ENCODE measurements at regions of chr9 and their contacts with region 1.

Region 1: GRCh38 chr9:70111042-70111602 is 67.5 kb downstream of the MAMDC2 start:
- DNase-seq: peak; percentile 80 to 84
- H3K4me3 ChIP-seq: no peak overlapping the region
- H3K27ac ChIP-seq: peak overlapping the region in 3 of 5 donors; percentile 17 to 71 (median 49)
- H3K4me1 ChIP-seq: peaks cover 10 to 42% (median 25%) of the 10 kb centered on the region in 4 donors
- H3K27me3 ChIP-seq: no peaks in the 10 kb centered on the region
- CTCF ChIP-seq: peak in 5 of 7 experiments; percentile 52 to 82 (median 75)
- EP300 ChIP-seq: no peak
- POLR2A ChIP-seq: no peak

Region 2: GRCh38 chr9:69969991-69970533 is 141.1 kb before region 1 on chr9:
- intact Hi-C with region 1: loop called (anchors 5 kb)
- DNase-seq: no peak
- H3K4me3 ChIP-seq: no peak overlapping the region
- H3K27ac ChIP-seq: no peak overlapping the region
- H3K4me1 ChIP-seq: peaks cover 0 to 4% (median 0%) of the 10 kb centered on the region in 4 donors
- H3K27me3 ChIP-seq: no peaks in the 10 kb centered on the region
- CTCF ChIP-seq: no peak
- EP300 ChIP-seq: no peak
- POLR2A ChIP-seq: no peak

Region 3: DNA sequence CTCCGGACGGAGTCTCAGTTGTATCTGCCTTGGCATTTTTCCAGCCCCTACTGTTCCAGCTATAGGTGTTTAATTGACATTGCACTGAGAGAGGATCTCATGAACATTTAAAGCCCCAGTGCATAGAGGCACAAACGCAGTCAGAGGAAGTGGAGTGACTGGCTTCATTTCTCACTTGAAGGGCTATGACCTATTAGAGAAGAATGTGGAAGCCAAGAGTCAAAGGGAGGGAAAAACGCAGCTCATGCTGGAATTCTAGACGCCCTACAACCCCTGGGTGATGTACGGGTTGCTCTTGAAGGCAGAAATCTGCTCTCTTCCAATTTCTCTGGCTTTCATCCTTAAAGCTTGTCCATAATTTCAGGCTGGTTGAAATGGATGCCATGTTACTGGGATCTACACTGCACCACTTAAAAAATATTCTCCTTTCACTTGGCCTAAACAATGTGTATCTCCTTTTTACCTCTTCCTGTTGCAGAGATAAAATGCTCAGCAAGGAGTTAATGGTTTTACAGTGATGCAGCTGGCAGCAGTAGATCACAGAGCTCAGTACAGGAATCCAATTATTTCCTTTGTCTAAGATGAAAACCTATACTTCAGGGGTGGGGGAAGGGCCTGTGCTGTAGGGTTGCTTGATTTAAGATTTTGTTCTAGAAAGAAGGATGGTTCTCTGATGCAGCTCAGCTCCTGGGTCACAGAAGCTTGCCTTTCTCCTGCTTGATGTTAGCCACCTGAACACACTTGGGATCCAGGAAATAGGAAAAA is 129.3 kb before region 1 on chr9:
- intact Hi-C with region 1: no loop called
- DNase-seq: no peak
- H3K4me3 ChIP-seq: no peak overlapping the region
- H3K27ac ChIP-seq: no peak overlapping the region
- H3K4me1 ChIP-seq: no peaks in the 10 kb centered on the region
- H3K27me3 ChIP-seq: no peaks in the 10 kb centered on the region
- CTCF ChIP-seq: no peak
- EP300 ChIP-seq: no peak
- POLR2A ChIP-seq: no peak

Measured in stomach (tissue), 19 donors.